ENCODE measurements at regions of chr3 and their contacts with region 1.

Region 1: GRCh38 chr3:9976721-9977709 is 9.6 kb downstream of the EMC3 start:
- DNase-seq: peak; percentile 52 to 75
- ATAC-seq: peak; percentile 94 to 99 (median 97)
- H3K4me3 ChIP-seq: peak overlapping the region in 9 of 10 donors; percentile 5 to 31 (median 21)
- H3K27ac ChIP-seq: peak overlapping the region; percentile 23 to 87 (median 78)
- H3K4me1 ChIP-seq: peaks cover 0 to 37% (median 17%) of the 10 kb centered on the region in 9 donors
- H3K27me3 ChIP-seq: no peaks in the 10 kb centered on the region
- CTCF ChIP-seq: no peak

Region 2: GRCh38 chr3:9915254-9916141 is 61.5 kb before region 1 on chr3:
- intact Hi-C with region 1: no loop called
- DNase-seq: peak; percentile 77 to 78
- ATAC-seq: peak; percentile 51 to 77 (median 68)
- H3K4me3 ChIP-seq: peak overlapping the region; percentile 51 to 79 (median 65)
- H3K27ac ChIP-seq: peak overlapping the region; percentile 70 to 97 (median 88)
- H3K4me1 ChIP-seq: peaks cover 11 to 42% (median 30%) of the 10 kb centered on the region in 9 donors
- H3K27me3 ChIP-seq: no peaks in the 10 kb centered on the region
- CTCF ChIP-seq: peak in 7 of 9 donors; percentile 19 to 65 (median 45)

Region 3: DNA sequence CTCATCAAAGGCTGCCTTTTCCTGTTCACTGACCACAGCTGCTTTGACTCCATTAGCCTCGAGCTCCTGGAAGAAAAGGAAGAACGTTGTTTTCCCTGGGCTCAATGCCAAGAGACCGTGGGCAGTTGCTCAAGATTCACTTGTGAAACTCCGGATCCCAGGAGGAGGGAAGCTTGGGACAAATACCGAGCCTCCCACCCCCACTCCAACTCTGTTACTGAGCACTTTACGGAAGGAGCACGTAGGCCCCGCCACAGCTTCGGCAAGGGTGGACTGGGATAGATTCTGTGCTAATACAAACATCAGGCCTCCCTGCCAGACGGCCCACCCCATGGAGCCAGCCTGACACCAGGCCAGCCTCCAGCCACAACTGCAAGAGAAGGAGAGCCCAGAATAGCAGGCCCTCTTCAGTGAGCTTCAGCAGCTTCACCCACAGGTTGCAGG is 38.5 kb after region 1 on chr3:
- intact Hi-C with region 1: loop called in 3 of 10 experiments (anchors 5 kb)
- DNase-seq: peak; percentile 77 to 91
- ATAC-seq: peak; percentile 57 to 70 (median 66)
- H3K4me3 ChIP-seq: peak overlapping the region in 5 of 10 donors; percentile 0 to 30 (median 8)
- H3K27ac ChIP-seq: peak overlapping the region; percentile 51 to 90 (median 88)
- H3K4me1 ChIP-seq: peaks cover 5 to 38% (median 28%) of the 10 kb centered on the region in 9 donors
- H3K27me3 ChIP-seq: no peaks in the 10 kb centered on the region
- CTCF ChIP-seq: no peak

Measured in heart right ventricle (tissue), 16 donors.